ENCODE measurements at regions of chr20 and their contacts with region 1.

Region 1: DNA sequence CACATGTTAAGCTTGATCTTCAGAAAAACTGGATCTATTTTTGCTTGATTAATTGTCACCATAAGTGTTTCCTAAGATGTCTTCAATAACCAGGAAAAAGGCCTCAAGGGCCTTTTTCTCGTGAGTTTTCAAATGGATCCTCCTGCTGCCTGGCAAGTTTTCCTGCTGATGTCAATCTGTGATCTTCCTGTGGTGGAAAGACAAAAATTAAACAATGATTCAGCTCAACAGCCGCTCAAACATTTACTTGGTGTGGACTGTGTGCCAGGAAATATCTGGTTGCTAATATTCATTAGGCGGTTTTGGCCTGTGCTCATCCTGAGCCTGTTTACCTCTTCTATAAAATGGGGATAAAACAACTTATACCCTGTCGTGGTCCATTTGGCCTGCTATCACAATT is 35.4 kb upstream of the SSTR4 start:
- DNase-seq: no peak
- ATAC-seq: peak in 1 of 2 donors; percentile 39
- H3K4me3 ChIP-seq: no peak overlapping the region
- H3K27ac ChIP-seq: no peak overlapping the region
- H3K4me1 ChIP-seq: no peaks in the 10 kb centered on the region
- H3K27me3 ChIP-seq: no peaks in the 10 kb centered on the region

Region 2: GRCh38 chr20:22471156-22471844 is 528.5 kb before region 1 on chr20:
- intact Hi-C with region 1: no loop called
- DNase-seq: no peak
- ATAC-seq: no peak
- H3K4me3 ChIP-seq: no peak overlapping the region
- H3K27ac ChIP-seq: no peak overlapping the region
- H3K4me1 ChIP-seq: no peaks in the 10 kb centered on the region
- H3K27me3 ChIP-seq: no peaks in the 10 kb centered on the region

Region 3: DNA sequence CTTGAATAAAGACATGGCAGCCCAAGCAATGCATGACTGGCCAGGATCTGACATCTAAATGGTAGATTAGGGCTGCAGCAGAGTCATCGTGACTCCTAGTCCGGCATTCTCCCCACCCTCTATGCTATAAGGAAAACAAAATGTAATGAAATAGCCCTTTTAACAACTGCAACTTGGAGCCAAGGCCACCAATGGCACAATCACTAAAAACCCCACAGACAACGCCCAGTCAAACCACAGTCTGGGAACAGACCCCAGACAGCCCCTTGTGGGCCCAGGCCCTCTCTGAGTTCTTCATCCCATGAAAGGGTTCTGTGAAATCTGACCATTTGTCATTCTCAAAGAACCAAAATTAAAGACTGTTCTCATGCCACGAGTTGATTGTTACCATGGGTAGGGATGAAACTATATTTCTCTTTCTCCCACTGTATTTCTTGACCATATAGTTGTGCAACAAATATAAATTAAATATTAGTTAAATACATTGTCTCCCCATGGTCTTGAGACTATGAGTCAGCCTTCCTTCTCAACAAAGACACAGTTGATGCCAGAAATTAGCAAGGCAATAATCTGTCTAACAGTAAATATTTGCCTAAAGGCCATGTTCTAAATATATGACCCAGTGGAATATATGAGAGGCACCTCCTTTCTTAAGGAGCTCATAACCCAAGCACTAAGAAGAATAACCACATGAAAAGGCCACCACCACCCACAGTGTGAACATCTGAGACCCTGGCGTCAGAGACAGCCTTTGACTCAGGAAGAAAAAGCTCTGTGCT is 50.2 kb before region 1 on chr20:
- intact Hi-C with region 1: loop called in 1 of 4 experiments (anchors 10 kb)
- DNase-seq: no peak
- ATAC-seq: no peak
- H3K4me3 ChIP-seq: no peak overlapping the region
- H3K27ac ChIP-seq: no peak overlapping the region
- H3K4me1 ChIP-seq: no peaks in the 10 kb centered on the region
- H3K27me3 ChIP-seq: no peaks in the 10 kb centered on the region

Measured in right cardiac atrium (tissue), 5 donors.